ENCODE measurements at regions of chr12 and their contacts with region 1.

Region 1: DNA sequence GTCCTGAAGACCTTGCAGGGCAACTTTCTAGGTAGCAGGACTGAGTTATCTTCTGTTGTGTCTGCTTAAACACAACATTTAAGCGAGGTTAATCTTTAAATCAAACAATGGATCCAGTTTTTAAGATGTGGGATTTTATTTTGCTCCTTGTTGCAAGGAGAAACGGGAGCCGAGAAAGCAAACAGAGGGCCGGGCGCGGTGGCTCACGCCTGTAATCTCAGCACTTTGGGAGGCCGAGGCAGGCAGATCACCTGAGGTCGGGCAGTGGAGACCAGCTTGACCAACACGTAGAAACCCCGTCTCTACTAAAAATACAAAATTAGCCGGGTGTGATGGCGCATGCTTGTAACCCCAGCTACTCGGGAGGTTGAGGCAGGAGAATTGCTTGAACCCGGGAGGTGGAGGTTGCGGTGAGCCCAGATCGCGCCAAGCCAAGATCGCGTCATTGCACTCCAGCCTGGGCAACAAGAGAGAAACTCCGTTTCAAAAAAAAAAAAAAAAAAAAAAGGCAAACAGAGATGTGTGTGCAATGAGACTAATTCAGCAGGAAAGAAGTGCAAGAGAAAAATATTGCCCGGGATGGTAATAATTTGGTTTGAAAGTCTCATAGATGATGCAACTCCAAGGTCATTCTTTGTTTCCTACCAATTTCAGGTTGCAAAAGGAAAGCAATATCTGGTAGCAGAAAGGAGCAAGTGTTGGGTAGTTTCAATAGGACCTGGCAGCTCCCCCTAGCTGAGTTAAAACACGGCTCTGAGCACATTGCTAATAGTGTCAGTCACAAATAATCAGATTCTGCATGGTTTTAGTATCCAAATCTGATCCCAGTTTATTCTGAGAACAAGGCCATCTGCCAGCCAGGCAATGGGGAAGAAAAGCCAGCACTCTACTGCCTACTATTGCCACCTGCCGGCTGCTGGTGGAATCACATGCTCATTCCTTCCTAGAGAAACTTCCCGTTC is 141.4 kb downstream of the PPM1H start:
- DNase-seq: peak; percentile 84 to 96
- ATAC-seq: peak; percentile 93 to 96
- H3K4me3 ChIP-seq: 0 out of 3 replicates have a peak overlapping the region, but pooled peaks have one; percentile 2
- H3K27ac ChIP-seq: peak overlapping the region; percentile 91 to 94
- H3K4me1 ChIP-seq: peaks cover 42% of the 10 kb centered on the region
- CTCF ChIP-seq: peak; percentile 98
- EP300 ChIP-seq: peak in 1 of 2 experiments; percentile 37; a peak in 2 of 5 replicates
- POLR2A ChIP-seq: no peak
- RAD21 ChIP-seq: peak; percentile 99 to 100

Region 2: GRCh38 chr12:62581288-62582064 is 212.1 kb before region 1 on chr12:
- CTCF ChIA-PET with region 1: interaction called, 131 read pairs
- POLR2A ChIA-PET with region 1: interaction called, 5 read pairs
- DNase-seq: peak; percentile 40 to 74
- ATAC-seq: peak; percentile 85 to 94
- H3K4me3 ChIP-seq: no peak overlapping the region
- H3K27ac ChIP-seq: peak overlapping the region; percentile 20 to 77
- H3K4me1 ChIP-seq: peaks cover 27% of the 10 kb centered on the region
- CTCF ChIP-seq: peak; percentile 83
- EP300 ChIP-seq: no peak
- POLR2A ChIP-seq: no peak
- RAD21 ChIP-seq: peak; percentile 88 to 90

Region 3: GRCh38 chr12:62603061-62603810 is 190.3 kb before region 1 on chr12:
- CTCF ChIA-PET with region 1: interaction called, 44 read pairs
- POLR2A ChIA-PET with region 1: interaction called, 19 read pairs
- DNase-seq: peak; percentile 61 to 89
- ATAC-seq: peak; percentile 84 to 85
- H3K4me3 ChIP-seq: peak overlapping the region; percentile 65
- H3K27ac ChIP-seq: peak overlapping the region; percentile 98
- H3K4me1 ChIP-seq: peaks cover 56% of the 10 kb centered on the region
- CTCF ChIP-seq: peak; percentile 41
- EP300 ChIP-seq: no peak
- POLR2A ChIP-seq: peak; percentile 68
- RAD21 ChIP-seq: peak; percentile 34 to 50; a peak in 4 of 5 replicates

Region 4: DNA sequence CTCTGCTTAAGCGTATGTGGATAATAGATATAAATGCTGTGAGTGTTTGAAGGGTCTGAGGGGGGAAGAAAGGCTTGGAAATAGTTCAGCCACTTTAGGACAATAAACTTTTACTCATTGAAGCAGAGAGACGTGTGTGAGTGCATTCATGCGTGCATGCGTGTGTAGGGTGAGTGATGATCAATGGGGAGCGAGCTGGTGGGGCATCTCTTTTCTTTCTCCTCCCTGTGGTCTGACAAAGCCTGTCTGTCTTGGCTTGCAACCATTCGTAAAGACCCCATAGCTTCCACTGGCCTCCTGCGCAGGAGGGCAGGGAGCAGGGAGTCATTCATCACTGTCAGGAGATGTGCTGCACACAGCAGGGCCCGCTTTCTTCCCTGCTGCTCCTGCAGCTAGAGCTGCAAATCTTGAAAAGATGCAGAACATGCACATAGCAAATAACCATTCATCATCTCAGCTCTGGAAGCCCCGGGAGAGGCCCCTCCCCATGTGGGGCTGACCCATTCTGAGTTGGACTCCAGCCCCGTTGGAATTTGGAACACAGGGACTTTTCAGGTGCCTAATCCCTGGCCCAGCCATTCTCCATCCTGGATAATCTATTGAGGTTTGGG is 81.8 kb before region 1 on chr12:
- CTCF ChIA-PET with region 1: interaction called, 14 read pairs
- POLR2A ChIA-PET with region 1: no interaction called
- DNase-seq: no peak
- ATAC-seq: no peak
- H3K4me3 ChIP-seq: no peak overlapping the region
- H3K27ac ChIP-seq: peak overlapping the region; percentile 42 to 94; a peak in 4 of 6 replicates
- H3K4me1 ChIP-seq: peaks cover 61% of the 10 kb centered on the region
- CTCF ChIP-seq: no peak
- EP300 ChIP-seq: no peak
- POLR2A ChIP-seq: no peak
- RAD21 ChIP-seq: no peak

Region 5: DNA sequence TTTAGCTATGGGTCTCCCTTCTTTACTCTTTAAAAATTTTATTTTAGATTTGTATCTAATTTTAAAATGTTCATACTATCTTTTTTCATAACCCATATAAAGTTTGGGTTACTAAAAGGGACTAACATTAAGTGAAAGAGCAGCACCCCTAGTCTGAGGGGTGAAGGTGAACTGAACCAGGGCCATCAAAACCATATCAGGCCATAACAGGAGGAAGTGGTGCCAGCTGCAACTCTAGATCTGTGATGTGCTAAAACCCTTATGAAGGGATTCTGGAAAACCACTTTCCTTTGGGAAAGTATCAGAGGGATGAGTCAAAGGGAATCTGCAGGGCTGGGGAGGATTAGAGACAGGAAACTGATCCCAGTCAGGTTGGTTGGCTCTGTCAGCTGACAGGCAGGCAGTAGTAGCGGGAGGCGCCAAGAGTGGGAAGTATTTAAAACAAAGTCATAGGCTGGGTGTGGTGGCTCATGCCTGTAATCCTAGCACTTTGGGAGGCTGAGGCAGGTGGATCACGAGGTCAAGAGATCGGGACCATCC is 21.1 kb before region 1 on chr12:
- CTCF ChIA-PET with region 1: interaction called, 10 read pairs
- POLR2A ChIA-PET with region 1: no interaction called
- DNase-seq: no peak
- ATAC-seq: no peak
- H3K4me3 ChIP-seq: no peak overlapping the region
- H3K27ac ChIP-seq: no peak overlapping the region; a peak in 1 of 6 replicates
- H3K4me1 ChIP-seq: peaks cover 39% of the 10 kb centered on the region
- CTCF ChIP-seq: no peak
- EP300 ChIP-seq: no peak
- POLR2A ChIP-seq: no peak
- RAD21 ChIP-seq: no peak

Measured in A549 (cell line).